Heart left ventricle (tissue), 16 donors: ENCODE measurements at regions of chr12 and their contacts with region 1.

Region 1: GRCh38 chr12:29691141-29691854 is 92.4 kb downstream of the TMTC1 start:
- DNase-seq: no peak
- ATAC-seq: peak in 2 of 4 donors; percentile 43 to 48
- H3K4me3 ChIP-seq: no peak overlapping the region
- H3K27ac ChIP-seq: no peak overlapping the region
- H3K4me1 ChIP-seq: peaks cover 0 to 20% (median 0%) of the 10 kb centered on the region in 12 donors
- H3K27me3 ChIP-seq: no peaks in the 10 kb centered on the region
- CTCF ChIP-seq: no peak
- POLR2A ChIP-seq: no peak

Region 2: DNA sequence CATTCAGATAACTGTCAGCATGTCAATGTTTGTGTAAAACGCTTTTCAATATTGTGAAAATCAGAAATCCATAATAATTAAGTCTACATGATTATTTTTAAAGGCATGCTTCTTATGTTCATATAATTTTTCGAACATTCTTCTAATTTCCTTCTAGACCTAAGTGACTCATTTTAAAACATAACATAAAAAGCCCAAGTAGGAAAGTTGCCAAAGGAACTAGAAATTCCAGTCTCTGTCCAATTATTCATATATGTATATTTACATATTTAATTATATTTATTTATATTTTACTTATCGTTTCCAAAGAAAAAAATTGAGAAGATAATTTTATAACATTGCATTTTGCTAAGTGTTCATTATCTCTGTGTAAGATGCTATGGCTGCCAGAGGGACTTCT is 18.0 kb before region 1 on chr12:
- intact Hi-C with region 1: no loop called
- DNase-seq: no peak
- ATAC-seq: no peak
- H3K4me3 ChIP-seq: no peak overlapping the region
- H3K27ac ChIP-seq: no peak overlapping the region
- H3K4me1 ChIP-seq: peaks cover 0 to 30% (median 5%) of the 10 kb centered on the region in 12 donors
- H3K27me3 ChIP-seq: no peaks in the 10 kb centered on the region
- CTCF ChIP-seq: no peak
- POLR2A ChIP-seq: no peak

Region 3: DNA sequence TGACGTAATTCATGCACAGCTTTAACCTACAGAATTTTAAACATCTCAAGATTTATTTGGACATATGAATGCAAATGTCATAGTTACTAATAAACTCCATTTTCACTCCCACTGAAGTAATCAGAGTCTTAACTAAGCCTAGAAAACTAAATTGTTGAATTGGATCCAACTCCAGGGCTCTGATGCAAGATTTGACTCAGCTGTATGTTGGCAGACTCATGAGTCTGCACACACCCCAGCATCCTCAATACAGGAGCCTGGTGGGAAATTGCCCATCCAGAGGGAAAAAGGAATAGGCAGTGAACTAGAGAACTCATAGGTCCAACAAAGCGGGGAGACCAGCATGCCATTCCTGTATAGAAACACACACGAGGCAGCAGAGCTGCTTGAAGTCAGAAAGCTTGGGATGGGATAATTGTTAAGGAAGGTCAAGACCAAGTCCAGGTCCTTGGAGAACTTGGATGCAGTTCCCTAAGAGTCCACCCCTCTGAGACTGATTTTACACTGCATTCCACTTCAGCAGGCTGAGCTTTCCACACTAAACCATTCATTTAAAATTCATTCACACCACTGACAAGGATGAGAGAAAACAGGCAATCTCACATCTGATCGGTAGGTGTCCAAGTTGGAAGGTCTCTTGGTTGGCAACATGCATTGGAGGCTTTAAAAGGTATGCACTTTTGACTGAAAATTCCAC is 78.0 kb after region 1 on chr12:
- intact Hi-C with region 1: loop called in 1 of 10 experiments (anchors 10 kb)
- DNase-seq: no peak
- ATAC-seq: peak in 3 of 4 donors; percentile 49 to 93 (median 88)
- H3K4me3 ChIP-seq: no peak overlapping the region
- H3K27ac ChIP-seq: no peak overlapping the region
- H3K4me1 ChIP-seq: peaks cover 0 to 39% (median 15%) of the 10 kb centered on the region in 12 donors
- H3K27me3 ChIP-seq: no peaks in the 10 kb centered on the region
- CTCF ChIP-seq: no peak
- POLR2A ChIP-seq: no peak

Region 4: DNA sequence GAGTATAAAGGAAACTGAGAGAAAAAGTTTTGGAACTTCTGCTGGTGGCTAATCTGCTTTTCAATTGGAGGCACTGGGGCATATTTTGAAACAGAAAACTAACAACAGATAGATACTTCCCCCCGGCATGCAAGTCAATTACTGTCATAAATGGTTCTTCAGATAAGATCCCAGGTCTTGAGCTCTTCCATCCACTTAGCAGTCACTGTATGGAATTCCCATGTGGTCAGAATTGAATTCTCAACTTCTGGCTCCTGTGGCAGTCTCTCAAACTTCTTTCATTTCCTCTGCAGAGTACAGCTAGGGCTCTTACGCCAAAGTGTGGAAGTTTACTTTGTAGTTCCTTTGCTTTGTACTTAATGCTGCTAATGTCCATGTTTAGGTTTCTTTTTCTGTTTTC is 552.1 kb after region 1 on chr12:
- intact Hi-C with region 1: no loop called
- DNase-seq: no peak
- ATAC-seq: no peak
- H3K4me3 ChIP-seq: no peak overlapping the region
- H3K27ac ChIP-seq: no peak overlapping the region
- H3K4me1 ChIP-seq: no peaks in the 10 kb centered on the region
- H3K27me3 ChIP-seq: no peaks in the 10 kb centered on the region
- CTCF ChIP-seq: no peak
- POLR2A ChIP-seq: no peak